ENCODE measurements at regions of chr2 and their contacts with region 1.

Region 1: DNA sequence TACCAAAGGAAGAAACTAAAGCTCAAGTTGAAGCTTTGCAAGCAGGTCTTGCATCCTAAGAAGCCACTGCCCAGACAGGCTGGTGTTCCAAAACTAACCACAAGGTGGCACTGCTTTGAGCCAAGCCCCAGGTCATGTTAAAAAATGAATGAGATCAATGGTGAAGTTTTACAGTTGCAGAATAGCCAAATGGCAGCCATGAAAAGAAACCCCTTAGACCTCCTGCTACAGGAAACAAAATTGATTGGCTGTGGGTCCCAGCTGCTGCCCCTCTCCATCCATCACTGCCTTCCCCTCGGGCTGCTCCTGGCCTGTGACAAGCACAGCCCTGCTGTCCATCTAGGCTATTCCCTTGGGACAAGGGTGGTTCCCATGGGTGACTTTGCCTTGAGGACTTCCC is 20.7 kb upstream of the MREG start:
- DNase-seq: peak in 1 of 2 donors; percentile 37
- ATAC-seq: peak in 1 of 2 donors; percentile 66
- H3K4me3 ChIP-seq: no peak overlapping the region
- H3K27ac ChIP-seq: no peak overlapping the region
- H3K4me1 ChIP-seq: no peaks in the 10 kb centered on the region
- H3K27me3 ChIP-seq: no peaks in the 10 kb centered on the region
- CTCF ChIP-seq: peak; percentile 49 to 88 (median 67)
- POLR2A ChIP-seq: no peak

Region 2: GRCh38 chr2:215851082-215851481 is 183.0 kb before region 1 on chr2:
- in situ Hi-C with region 1: no loop called
- intact Hi-C with region 1: no loop called
- DNase-seq: no peak
- ATAC-seq: no peak
- H3K4me3 ChIP-seq: no peak overlapping the region
- H3K27ac ChIP-seq: peak overlapping the region; percentile 3 to 38 (median 10)
- H3K4me1 ChIP-seq: no peaks in the 10 kb centered on the region
- H3K27me3 ChIP-seq: no peaks in the 10 kb centered on the region
- CTCF ChIP-seq: no peak
- POLR2A ChIP-seq: no peak

Region 3: GRCh38 chr2:216139884-216140283 is 105.8 kb after region 1 on chr2:
- in situ Hi-C with region 1: no loop called
- intact Hi-C with region 1: no loop called
- DNase-seq: no peak
- ATAC-seq: no peak
- H3K4me3 ChIP-seq: no peak overlapping the region
- H3K27ac ChIP-seq: no peak overlapping the region
- H3K4me1 ChIP-seq: no peaks in the 10 kb centered on the region
- H3K27me3 ChIP-seq: no peaks in the 10 kb centered on the region
- CTCF ChIP-seq: peak in 1 of 5 experiments; percentile 28
- POLR2A ChIP-seq: no peak

Region 4: DNA sequence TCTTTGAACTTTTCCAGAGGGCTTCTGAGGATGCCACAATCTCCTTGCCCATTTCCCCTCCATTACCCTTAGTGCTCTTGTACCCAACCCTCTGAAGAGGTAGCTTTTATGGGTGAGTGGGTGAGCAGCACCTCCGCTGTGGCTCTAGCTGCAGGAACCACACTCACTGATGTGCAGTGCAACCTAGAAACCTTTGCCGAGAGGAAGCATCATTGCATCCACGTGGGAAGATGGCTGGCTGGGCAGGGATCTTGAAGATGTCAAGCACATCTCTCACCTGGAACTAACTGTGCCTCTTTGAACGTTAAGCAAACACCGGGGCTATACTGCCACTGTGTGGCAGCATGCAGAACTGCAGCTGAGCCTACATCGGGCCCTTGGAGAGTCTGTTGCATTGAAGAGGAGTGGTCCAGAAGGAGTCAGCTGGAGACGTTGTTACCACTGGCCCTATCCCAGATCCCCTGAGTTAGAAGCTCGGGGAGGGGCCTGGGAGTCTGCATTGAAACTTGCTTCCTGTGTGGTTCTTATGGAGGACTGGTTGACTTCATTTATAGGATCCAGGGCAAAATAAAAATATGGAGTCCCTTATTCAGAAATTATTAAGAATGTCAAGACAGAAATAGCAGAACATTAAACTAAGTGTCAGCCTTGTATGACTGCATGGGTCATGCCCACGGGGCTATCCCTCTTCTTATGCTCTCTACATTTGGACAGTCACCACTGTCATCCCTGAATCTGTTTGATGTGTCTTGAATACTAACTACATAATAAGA is 632.6 kb after region 1 on chr2:
- in situ Hi-C with region 1: loop called (anchors 25 kb)
- intact Hi-C with region 1: loop called (anchors 1 kb)
- DNase-seq: peak in 1 of 2 donors; percentile 58
- ATAC-seq: peak; percentile 81 to 87
- H3K4me3 ChIP-seq: no peak overlapping the region
- H3K27ac ChIP-seq: no peak overlapping the region
- H3K4me1 ChIP-seq: peaks cover 0 to 4% of the 10 kb centered on the region in 2 donors
- H3K27me3 ChIP-seq: no peaks in the 10 kb centered on the region
- CTCF ChIP-seq: peak; percentile 94 to 98 (median 97)
- POLR2A ChIP-seq: no peak

Measured in gastrocnemius medialis (tissue), 4 donors.